Heart left ventricle (tissue), 16 donors: ENCODE measurements at regions of chr2 and their contacts with region 1.

Region 1: DNA sequence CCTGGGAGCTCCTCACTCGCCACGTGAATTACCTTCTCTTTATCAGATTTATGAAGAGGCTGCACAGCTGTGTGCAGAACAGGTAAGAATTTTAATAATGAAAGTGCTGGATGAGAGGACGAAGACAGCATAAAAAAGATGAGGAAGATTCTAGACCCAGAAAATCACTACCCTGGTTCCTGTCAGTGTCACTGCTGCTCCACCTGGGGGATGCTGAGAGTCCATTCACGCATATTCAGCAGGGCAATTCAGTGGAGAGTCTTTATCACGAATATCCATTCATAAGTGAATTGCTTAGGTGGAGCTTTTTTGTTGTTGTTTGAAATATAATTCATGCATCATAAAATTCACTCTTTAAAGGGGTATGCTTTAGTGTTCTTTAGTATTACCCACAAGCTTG is 52.0 kb downstream of the MRPL33 start:
- DNase-seq: peak in 1 of 5 donors; percentile 31
- ATAC-seq: peak; percentile 68 to 85 (median 79)
- H3K4me3 ChIP-seq: peak overlapping the region in 2 of 12 donors; percentile 6 to 26
- H3K27ac ChIP-seq: peak overlapping the region in 9 of 12 donors; percentile 39 to 73 (median 54)
- H3K4me1 ChIP-seq: peaks cover 0 to 19% (median 0%) of the 10 kb centered on the region in 12 donors
- H3K27me3 ChIP-seq: no peaks in the 10 kb centered on the region
- CTCF ChIP-seq: peak in 10 of 12 donors; percentile 9 to 50 (median 30)
- POLR2A ChIP-seq: no peak

Region 2: DNA sequence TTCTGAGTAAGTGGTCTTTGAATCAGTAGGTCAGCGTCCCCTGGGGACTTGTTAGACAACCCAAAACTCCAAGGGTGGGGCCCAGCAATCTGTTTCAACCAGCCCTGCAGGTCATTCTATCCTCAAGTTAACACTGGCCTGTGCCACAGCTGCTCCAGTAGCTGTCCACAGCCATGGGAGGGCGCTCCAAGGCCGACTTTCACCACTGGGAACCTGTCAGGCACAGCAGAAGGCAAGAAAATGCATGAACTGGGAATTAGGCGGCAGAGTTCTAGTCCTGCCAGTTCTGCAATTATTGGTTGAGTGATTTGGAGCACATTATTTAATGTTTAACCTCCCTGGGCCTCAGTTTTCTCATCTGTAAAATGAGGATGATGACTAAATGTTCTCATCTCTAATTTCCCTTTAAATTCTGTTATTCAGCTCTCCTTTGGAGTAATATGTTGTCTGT is 69.4 kb before region 1 on chr2:
- intact Hi-C with region 1: loop called in 1 of 10 experiments (anchors 5 kb)
- DNase-seq: peak; percentile 75 to 91 (median 82)
- ATAC-seq: peak; percentile 69 to 86 (median 84)
- H3K4me3 ChIP-seq: no peak overlapping the region
- H3K27ac ChIP-seq: no peak overlapping the region
- H3K4me1 ChIP-seq: peaks cover 0 to 32% (median 3%) of the 10 kb centered on the region in 12 donors
- H3K27me3 ChIP-seq: no peaks in the 10 kb centered on the region
- CTCF ChIP-seq: peak; percentile 73 to 90 (median 81)
- POLR2A ChIP-seq: no peak

Region 3: DNA sequence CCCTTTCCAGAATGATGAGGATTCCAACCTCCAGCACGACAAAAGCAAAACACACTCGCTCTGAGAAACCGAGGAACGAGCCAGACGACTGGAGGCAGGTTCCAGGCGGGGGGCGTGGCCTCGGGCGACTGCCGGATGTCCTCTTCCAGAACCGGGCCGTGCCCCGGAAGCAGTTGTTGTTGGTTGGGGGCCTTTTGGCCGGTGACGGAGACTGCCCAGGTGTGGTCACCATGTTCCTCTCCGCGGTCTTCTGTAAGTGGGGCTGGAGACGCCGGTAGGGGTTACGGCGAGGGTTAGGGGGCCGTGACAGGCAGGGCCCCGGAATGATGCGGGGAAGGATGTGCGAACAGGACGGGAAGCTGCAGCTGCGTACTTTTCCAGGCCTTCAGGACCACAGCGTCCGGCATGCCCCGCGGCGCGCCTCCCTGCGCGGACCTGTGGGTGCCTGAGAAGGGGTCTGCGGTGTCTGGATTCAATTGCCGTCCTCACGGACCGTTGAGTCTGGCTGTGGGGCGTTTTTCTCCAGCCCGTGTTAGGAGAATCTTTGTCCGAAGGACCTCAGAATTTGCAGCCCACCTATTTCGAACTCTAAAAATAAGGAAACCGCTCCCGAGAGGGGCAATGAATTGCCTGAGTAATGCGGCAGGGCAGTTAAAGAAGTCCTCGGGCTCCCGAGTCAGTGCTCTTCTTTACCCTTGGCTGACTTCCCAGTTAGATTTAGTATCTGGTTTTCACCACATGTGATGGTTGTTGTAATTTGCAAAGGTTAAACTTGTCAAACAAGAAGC is 51.8 kb before region 1 on chr2 and contains the start of gene MRPL33:
- intact Hi-C with region 1: loop called in 1 of 10 experiments (anchors 1 kb)
- DNase-seq: peak; percentile 96 to 98 (median 96)
- ATAC-seq: peak; percentile 95 to 98 (median 98)
- H3K4me3 ChIP-seq: peak within 1 kb of the TSS; percentile 56 to 89 (median 76)
- H3K27ac ChIP-seq: peak within 1 kb of the TSS; percentile 88 to 97 (median 92)
- H3K4me1 ChIP-seq: peaks cover 4 to 50% (median 37%) of the 10 kb centered on the region in 12 donors
- H3K27me3 ChIP-seq: no peaks in the 10 kb centered on the region
- CTCF ChIP-seq: no peak
- POLR2A ChIP-seq: peak in 1 of 2 donors; percentile 61
- total RNA-seq, gene MRPL33: 163 to 503 (median 305) TPM

Region 4: DNA sequence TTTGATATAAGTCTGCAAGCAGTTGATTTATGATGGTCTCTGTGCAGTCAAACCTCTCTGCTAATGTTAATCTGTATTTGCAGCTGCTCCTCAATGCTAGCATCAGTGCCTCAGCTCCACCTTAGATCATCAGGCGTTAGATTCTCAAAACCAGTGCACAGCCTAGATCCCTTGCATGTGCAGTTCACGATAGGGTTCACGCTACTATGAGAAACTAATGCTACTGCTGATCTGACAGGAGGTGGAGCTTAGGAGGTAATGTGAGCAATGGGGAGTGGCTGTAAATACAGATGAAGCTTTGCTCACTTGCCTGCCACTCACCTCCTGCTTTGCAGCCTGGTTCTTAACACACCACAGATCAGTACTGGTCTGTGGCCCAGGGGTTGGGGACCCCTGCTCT is 48.2 kb after region 1 on chr2:
- intact Hi-C with region 1: loop called in 1 of 10 experiments (anchors 10 kb)
- DNase-seq: no peak
- ATAC-seq: no peak
- H3K4me3 ChIP-seq: no peak overlapping the region
- H3K27ac ChIP-seq: no peak overlapping the region
- H3K4me1 ChIP-seq: no peaks in the 10 kb centered on the region
- H3K27me3 ChIP-seq: no peaks in the 10 kb centered on the region
- CTCF ChIP-seq: no peak
- POLR2A ChIP-seq: no peak